ENCODE measurements at regions of chr17 and their contacts with region 1.

Region 1: GRCh38 chr17:76523084-76524037 is 14.1 kb downstream of the CYGB start:
- DNase-seq: peak; percentile 93

Region 2: GRCh38 chr17:76623271-76624146 is 100.1 kb after region 1 on chr17:
- intact Hi-C with region 1: loop called in 1 of 2 experiments (anchors 10 kb)
- DNase-seq: peak; percentile 92

Measured in posterior vena cava (tissue), 2 donors.